CD8-positive, alpha-beta T cell (primary cell): ENCODE measurements at regions of chr4 and their contacts with region 1.

Region 1: GRCh38 chr4:6802025-6802424 is 19.5 kb downstream of the KIAA0232 start:
- DNase-seq: no peak
- ATAC-seq: no peak
- H3K4me3 ChIP-seq: no peak overlapping the region
- H3K4me3 Mint-ChIP-seq: no peak overlapping the region
- H3K27ac ChIP-seq: no peak overlapping the region
- H3K27ac Mint-ChIP-seq: no peak overlapping the region
- H3K4me1 ChIP-seq: peaks cover 7% of the 10 kb centered on the region
- H3K4me1 Mint-ChIP-seq: peaks cover 54% of the 10 kb centered on the region
- H3K27me3 ChIP-seq: no peaks in the 10 kb centered on the region
- H3K27me3 Mint-ChIP-seq: no peaks in the 10 kb centered on the region
- CTCF ChIP-seq: no peak

Region 2: GRCh38 chr4:6855692-6856297 is 53.8 kb after region 1 on chr4:
- CTCF ChIA-PET with region 1: no interaction called
- POLR2A ChIA-PET with region 1: no interaction called
- intact Hi-C with region 1: loop called in 1 of 2 experiments (anchors 5 kb)
- DNase-seq: peak in 4 of 9 experiments; percentile 18 to 77 (median 54)
- ATAC-seq: peak; percentile 84
- H3K4me3 ChIP-seq: no peak overlapping the region
- H3K4me3 Mint-ChIP-seq: no peak overlapping the region
- H3K27ac ChIP-seq: peak overlapping the region in 1 of 2 experiments; percentile 53
- H3K27ac Mint-ChIP-seq: peak overlapping the region; percentile 73
- H3K4me1 ChIP-seq: no peaks in the 10 kb centered on the region
- H3K4me1 Mint-ChIP-seq: peaks cover 22% of the 10 kb centered on the region
- H3K27me3 ChIP-seq: no peaks in the 10 kb centered on the region
- H3K27me3 Mint-ChIP-seq: no peaks in the 10 kb centered on the region
- CTCF ChIP-seq: no peak